CD4-positive, alpha-beta T cell (primary cell): ENCODE measurements at regions of chr12 and their contacts with region 1.

Region 1: DNA sequence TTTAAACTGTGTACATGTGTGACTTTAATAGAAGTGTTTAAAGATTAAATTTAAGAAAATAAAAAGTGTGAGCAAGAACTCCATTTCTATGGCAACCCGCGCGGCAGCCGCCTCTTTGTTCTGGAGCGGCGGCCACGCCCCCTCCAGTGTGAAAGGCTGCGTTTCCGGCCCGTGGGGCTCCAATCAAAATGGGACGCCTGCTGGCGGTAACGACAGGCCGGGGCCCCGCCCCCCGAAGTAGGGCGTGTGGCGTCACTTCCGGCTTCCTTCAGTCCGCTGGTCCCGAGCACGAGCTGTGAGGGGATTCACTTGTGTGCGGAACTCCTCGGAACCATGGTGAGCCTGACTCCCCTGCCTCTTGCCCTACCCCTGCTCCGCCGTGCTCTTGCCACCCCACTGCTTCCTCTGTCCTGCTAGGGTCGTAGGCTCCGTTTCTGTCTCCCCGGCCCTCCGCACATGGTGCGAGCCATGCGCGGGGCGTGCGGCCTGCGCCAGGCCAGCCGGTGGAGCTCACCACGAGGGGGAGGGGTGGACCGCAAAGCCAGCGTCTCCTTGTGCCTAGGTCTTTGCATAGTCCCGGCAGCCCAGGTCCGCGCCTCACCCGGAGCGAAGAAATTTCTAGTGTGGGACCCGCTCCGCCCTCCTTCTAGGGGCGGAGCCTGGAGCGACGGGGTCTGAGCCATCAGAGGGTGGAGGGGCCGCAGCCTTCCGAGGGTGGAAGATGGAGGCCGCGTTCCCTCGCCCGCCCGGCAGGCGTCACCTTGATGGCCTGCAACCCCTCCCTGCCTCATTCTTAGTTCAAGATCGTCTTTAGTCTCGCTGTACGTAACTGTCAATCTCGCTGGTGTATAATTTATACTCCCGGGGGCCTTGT is at the start of gene CCT2:
- DNase-seq: peak; percentile 92 to 99 (median 96)
- ATAC-seq: peak; percentile 87
- H3K4me3 ChIP-seq: peak within 1 kb of the TSS; percentile 98
- H3K4me3 Mint-ChIP-seq: peak within 1 kb of the TSS; percentile 99
- H3K27ac ChIP-seq: peak within 1 kb of the TSS; percentile 96 to 97
- H3K27ac Mint-ChIP-seq: peak within 1 kb of the TSS; percentile 98
- H3K4me1 ChIP-seq: peaks cover 12% of the 10 kb centered on the region
- H3K4me1 Mint-ChIP-seq: peaks cover 27% of the 10 kb centered on the region
- H3K27me3 ChIP-seq: no peaks in the 10 kb centered on the region
- H3K27me3 Mint-ChIP-seq: no peaks in the 10 kb centered on the region
- CTCF ChIP-seq: peak; percentile 28
- total RNA-seq, gene CCT2: 173 to 177 TPM

Region 2: DNA sequence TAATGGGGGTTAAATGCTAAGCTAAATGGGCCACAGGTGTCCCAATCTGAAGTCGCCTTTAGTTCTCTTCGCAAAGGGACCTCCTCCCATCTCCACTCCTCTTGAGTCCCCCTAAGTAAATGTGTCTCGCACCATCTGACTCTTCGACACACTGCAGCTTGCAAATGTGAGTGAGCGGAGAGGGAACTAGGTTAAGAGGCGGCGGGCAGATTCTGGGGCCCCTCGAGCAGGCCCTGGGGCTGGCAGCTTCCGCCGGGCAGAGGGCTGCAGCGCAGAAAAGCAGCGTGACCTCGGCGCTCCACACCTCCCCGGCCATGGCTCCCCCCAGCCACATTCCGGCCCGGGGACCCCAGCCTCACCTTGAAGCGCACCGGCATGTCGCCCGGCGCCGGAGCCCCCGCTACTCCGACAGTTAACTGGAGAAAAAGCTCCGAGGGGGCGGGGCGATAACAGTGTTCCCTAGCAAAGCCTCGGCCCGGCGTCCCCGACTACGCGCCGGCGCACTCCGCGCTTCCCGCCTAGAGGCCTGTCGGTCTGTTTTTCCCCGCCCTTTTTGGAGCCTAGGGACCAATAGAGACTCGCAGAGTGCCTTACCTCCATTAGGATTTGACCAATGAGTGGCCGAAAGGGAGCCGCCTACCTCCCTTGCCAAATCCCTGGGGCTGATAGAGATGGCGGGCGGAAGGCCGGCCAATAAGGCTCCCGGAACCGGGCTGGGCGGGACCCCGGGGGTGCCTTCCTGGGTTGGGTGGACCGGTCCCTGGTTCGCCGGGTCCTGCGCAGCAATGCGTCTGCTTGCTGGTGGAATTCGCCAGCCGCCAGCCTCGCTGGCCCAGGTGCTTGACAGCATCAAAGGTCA is 1253.3 kb before region 1 on chr12 and contains the start of gene MDM1:
- CTCF ChIA-PET with region 1: no interaction called
- POLR2A ChIA-PET with region 1: no interaction called
- intact Hi-C with region 1: loop called in 1 of 2 experiments (anchors 5 kb)
- DNase-seq: peak; percentile 85 to 99 (median 94)
- ATAC-seq: peak; percentile 96
- H3K4me3 ChIP-seq: peak within 1 kb of the TSS; percentile 66
- H3K4me3 Mint-ChIP-seq: peak within 1 kb of the TSS; percentile 91
- H3K27ac ChIP-seq: peak within 1 kb of the TSS; percentile 30 to 66
- H3K27ac Mint-ChIP-seq: peak within 1 kb of the TSS; percentile 84
- H3K4me1 ChIP-seq: peaks cover 25% of the 10 kb centered on the region
- H3K4me1 Mint-ChIP-seq: peaks cover 59% of the 10 kb centered on the region
- H3K27me3 ChIP-seq: no peaks in the 10 kb centered on the region
- H3K27me3 Mint-ChIP-seq: no peaks in the 10 kb centered on the region
- CTCF ChIP-seq: no peak
- total RNA-seq, gene MDM1: 11.0 to 11.6 TPM

Region 3: GRCh38 chr12:69239352-69239921 is 346.0 kb before region 1 on chr12 and contains the start of gene CPSF6:
- CTCF ChIA-PET with region 1: no interaction called
- POLR2A ChIA-PET with region 1: interaction called, 3 read pairs
- intact Hi-C with region 1: loop called in 1 of 2 experiments (anchors 5 kb)
- DNase-seq: peak; percentile 93 to 99 (median 96)
- ATAC-seq: peak; percentile 85
- H3K4me3 ChIP-seq: peak within 1 kb of the TSS; percentile 87
- H3K4me3 Mint-ChIP-seq: peak within 1 kb of the TSS; percentile 97
- H3K27ac ChIP-seq: peak within 1 kb of the TSS; percentile 85 to 86
- H3K27ac Mint-ChIP-seq: peak within 1 kb of the TSS; percentile 99
- H3K4me1 ChIP-seq: peaks cover 30% of the 10 kb centered on the region
- H3K4me1 Mint-ChIP-seq: peaks cover 59% of the 10 kb centered on the region
- H3K27me3 ChIP-seq: no peaks in the 10 kb centered on the region
- H3K27me3 Mint-ChIP-seq: no peaks in the 10 kb centered on the region
- CTCF ChIP-seq: no peak
- total RNA-seq, gene CPSF6: 80.9 to 86.7 TPM

Region 4: GRCh38 chr12:69470189-69471075 is 115.0 kb before region 1 on chr12 and contains the start of gene FRS2:
- CTCF ChIA-PET with region 1: no interaction called
- POLR2A ChIA-PET with region 1: interaction called, 3 read pairs
- intact Hi-C with region 1: loop called in 1 of 2 experiments (anchors 5 kb)
- DNase-seq: peak; percentile 68 to 90 (median 82)
- ATAC-seq: peak; percentile 98
- H3K4me3 ChIP-seq: peak within 1 kb of the TSS; percentile 77
- H3K4me3 Mint-ChIP-seq: peak within 1 kb of the TSS; percentile 100
- H3K27ac ChIP-seq: peak within 1 kb of the TSS; percentile 63 to 72
- H3K27ac Mint-ChIP-seq: peak within 1 kb of the TSS; percentile 92
- H3K4me1 ChIP-seq: peaks cover 12% of the 10 kb centered on the region
- H3K4me1 Mint-ChIP-seq: peaks cover 55% of the 10 kb centered on the region
- H3K27me3 ChIP-seq: no peaks in the 10 kb centered on the region
- H3K27me3 Mint-ChIP-seq: no peaks in the 10 kb centered on the region
- CTCF ChIP-seq: no peak
- total RNA-seq, gene FRS2: 21.7 to 24.9 TPM

Region 5: GRCh38 chr12:69502345-69503081 is 82.9 kb before region 1 on chr12:
- CTCF ChIA-PET with region 1: no interaction called
- POLR2A ChIA-PET with region 1: no interaction called
- intact Hi-C with region 1: no loop called
- DNase-seq: no peak
- ATAC-seq: no peak
- H3K4me3 ChIP-seq: no peak overlapping the region
- H3K4me3 Mint-ChIP-seq: no peak overlapping the region
- H3K27ac ChIP-seq: no peak overlapping the region
- H3K27ac Mint-ChIP-seq: no peak overlapping the region
- H3K4me1 ChIP-seq: no peaks in the 10 kb centered on the region
- H3K4me1 Mint-ChIP-seq: peaks cover 69% of the 10 kb centered on the region
- H3K27me3 ChIP-seq: no peaks in the 10 kb centered on the region
- H3K27me3 Mint-ChIP-seq: no peaks in the 10 kb centered on the region
- CTCF ChIP-seq: no peak

Region 6: GRCh38 chr12:69570545-69571399 is 14.7 kb before region 1 on chr12:
- CTCF ChIA-PET with region 1: interaction called, 15 read pairs
- POLR2A ChIA-PET with region 1: interaction called, 8 read pairs
- intact Hi-C with region 1: no loop called
- DNase-seq: peak; percentile 15 to 87 (median 36)
- ATAC-seq: peak; percentile 88
- H3K4me3 ChIP-seq: no peak overlapping the region
- H3K4me3 Mint-ChIP-seq: no peak overlapping the region
- H3K27ac ChIP-seq: no peak overlapping the region
- H3K27ac Mint-ChIP-seq: no peak overlapping the region
- H3K4me1 ChIP-seq: no peaks in the 10 kb centered on the region
- H3K4me1 Mint-ChIP-seq: no peaks in the 10 kb centered on the region
- H3K27me3 ChIP-seq: no peaks in the 10 kb centered on the region
- H3K27me3 Mint-ChIP-seq: no peaks in the 10 kb centered on the region
- CTCF ChIP-seq: peak; percentile 92

Region 7: GRCh38 chr12:69738351-69739286 is 153.2 kb after region 1 on chr12 and contains the start of gene RAB3IP:
- CTCF ChIA-PET with region 1: interaction called, 4 read pairs
- POLR2A ChIA-PET with region 1: interaction called, 5 read pairs
- intact Hi-C with region 1: loop called (anchors 5 kb)
- DNase-seq: peak; percentile 84 to 98 (median 92)
- ATAC-seq: peak; percentile 84
- H3K4me3 ChIP-seq: peak within 1 kb of the TSS; percentile 82
- H3K4me3 Mint-ChIP-seq: peak within 1 kb of the TSS; percentile 86
- H3K27ac ChIP-seq: peak within 1 kb of the TSS; percentile 48 to 68
- H3K27ac Mint-ChIP-seq: peak within 1 kb of the TSS; percentile 80
- H3K4me1 ChIP-seq: peaks cover 11% of the 10 kb centered on the region
- H3K4me1 Mint-ChIP-seq: peaks cover 27% of the 10 kb centered on the region
- H3K27me3 ChIP-seq: no peaks in the 10 kb centered on the region
- H3K27me3 Mint-ChIP-seq: peaks cover 6% of the 10 kb centered on the region
- CTCF ChIP-seq: peak; percentile 75
- total RNA-seq, gene RAB3IP: 15.2 to 19.6 TPM

Region 8: DNA sequence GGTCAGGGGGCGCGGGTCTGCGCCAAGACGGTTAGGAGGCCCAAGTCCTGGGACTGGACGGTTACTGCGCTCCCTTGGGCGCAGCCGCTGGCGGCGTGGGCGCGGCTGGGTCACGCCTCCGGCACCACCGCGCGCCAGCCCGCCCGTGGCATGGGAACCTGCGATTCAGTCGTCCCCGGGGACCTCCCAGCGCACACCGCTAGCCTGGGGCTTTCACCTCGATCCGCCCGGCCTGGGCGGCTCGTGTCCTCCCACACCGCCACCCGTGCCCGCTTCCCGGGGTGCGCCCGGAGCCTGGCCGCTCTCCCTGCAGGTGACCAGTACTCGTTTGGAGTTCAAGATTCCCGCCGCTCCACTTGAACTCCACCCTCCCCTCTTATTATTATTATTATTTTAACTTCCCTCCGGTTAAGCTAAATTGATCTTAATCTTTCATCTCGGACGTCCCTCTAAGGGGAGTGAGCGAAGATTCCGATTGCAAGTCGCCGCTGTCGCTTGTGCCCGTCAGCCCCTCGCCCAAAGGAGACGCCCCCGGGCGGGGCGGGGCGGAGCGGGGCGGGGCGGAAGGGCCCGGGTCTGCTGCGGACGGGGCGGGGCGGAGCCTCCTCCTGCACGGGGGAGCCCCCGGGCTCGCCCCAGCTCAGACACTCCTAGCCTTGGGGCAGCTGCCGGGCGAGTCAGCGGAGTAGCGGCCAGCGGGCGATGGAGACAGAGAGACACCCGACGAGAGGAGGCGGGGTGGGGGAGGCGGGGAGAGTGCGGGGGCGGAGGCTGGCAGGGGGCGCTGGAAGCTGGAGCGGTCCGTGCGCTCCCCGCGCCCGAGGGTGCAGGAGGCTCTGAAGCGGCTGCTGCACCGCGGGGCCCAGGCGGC is 780.5 kb after region 1 on chr12 and contains the start of gene KCNMB4:
- CTCF ChIA-PET with region 1: no interaction called
- POLR2A ChIA-PET with region 1: no interaction called
- intact Hi-C with region 1: loop called in 1 of 2 experiments (anchors 10 kb)
- DNase-seq: peak; percentile 43 to 87 (median 64)
- ATAC-seq: peak; percentile 70
- H3K4me3 ChIP-seq: peak within 1 kb of the TSS; percentile 81
- H3K4me3 Mint-ChIP-seq: peak within 1 kb of the TSS; percentile 96
- H3K27ac ChIP-seq: peak within 1 kb of the TSS; percentile 18 to 36
- H3K27ac Mint-ChIP-seq: peak within 1 kb of the TSS; percentile 77
- H3K4me1 ChIP-seq: peaks cover 18% of the 10 kb centered on the region
- H3K4me1 Mint-ChIP-seq: peaks cover 33% of the 10 kb centered on the region
- H3K27me3 ChIP-seq: peaks cover 0 to 7% of the 10 kb centered on the region in 2 experiments
- H3K27me3 Mint-ChIP-seq: peaks cover 5% of the 10 kb centered on the region
- CTCF ChIP-seq: no peak
- total RNA-seq, gene KCNMB4: 0.53 to 0.71 TPM